IMR-90 (cell line): ENCODE measurements at regions of chr17 and their contacts with region 1.

Region 1: DNA sequence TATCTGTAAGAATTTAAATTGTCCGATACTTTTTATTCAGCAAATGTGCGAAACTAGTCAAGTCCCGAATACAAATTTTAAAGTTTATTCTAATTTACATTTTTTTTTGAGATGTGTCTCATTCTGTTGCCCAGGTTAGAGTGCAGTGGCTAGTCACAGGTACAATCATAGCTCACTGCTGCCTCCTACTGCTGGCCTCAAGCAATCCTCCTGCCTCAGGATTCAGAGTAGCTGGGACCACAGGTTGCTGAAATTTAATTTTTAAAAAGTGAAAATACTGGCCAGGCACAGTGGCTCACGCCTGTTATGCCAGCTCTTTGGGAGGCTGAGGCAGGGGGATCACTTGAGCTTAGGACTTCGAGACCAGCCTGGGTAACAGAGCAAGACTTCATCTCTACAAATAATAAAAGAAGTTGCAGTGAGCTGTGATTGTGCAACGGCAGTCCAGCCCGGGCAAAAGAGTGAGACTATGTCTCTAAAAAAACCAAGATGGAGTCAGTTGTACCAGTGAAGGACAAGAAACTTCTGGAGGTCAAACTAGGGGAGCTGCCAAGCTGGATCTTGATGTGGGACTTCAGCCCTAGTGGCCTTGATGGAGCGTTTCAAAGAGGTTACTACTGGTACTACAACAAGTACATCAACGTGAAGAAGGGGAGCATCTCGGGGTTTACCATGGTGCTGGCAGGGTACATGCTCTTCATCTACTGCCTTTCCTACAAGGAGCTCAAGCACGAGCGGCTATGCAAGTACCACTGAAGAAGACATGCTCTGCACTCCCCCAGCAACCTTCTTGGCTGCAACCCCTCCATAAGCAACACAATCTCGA is 5.6 kb downstream of the POLG2 start:
- DNase-seq: peak; percentile 42
- ATAC-seq: peak; percentile 66
- H3K4me3 ChIP-seq: no peak overlapping the region
- H3K27ac ChIP-seq: no peak overlapping the region
- H3K4me1 ChIP-seq: no peaks in the 10 kb centered on the region
- H3K27me3 ChIP-seq: no peaks in the 10 kb centered on the region
- CTCF ChIP-seq: peak; percentile 63
- POLR2A ChIP-seq: no peak
- RAD21 ChIP-seq: peak; percentile 70

Region 2: GRCh38 chr17:64306850-64307463 is 184.3 kb before region 1 on chr17:
- CTCF ChIA-PET with region 1: no interaction called
- POLR2A ChIA-PET with region 1: no interaction called
- dilution Hi-C with region 1: no loop called
- in situ Hi-C with region 1: no loop called
- intact Hi-C with region 1: loop called (anchors 5 kb)
- DNase-seq: peak; percentile 67
- ATAC-seq: peak; percentile 65
- H3K4me3 ChIP-seq: no peak overlapping the region
- H3K27ac ChIP-seq: no peak overlapping the region
- H3K4me1 ChIP-seq: no peaks in the 10 kb centered on the region
- H3K27me3 ChIP-seq: peaks cover 41% of the 10 kb centered on the region
- CTCF ChIP-seq: peak; percentile 82
- POLR2A ChIP-seq: no peak
- RAD21 ChIP-seq: peak; percentile 50

Region 3: DNA sequence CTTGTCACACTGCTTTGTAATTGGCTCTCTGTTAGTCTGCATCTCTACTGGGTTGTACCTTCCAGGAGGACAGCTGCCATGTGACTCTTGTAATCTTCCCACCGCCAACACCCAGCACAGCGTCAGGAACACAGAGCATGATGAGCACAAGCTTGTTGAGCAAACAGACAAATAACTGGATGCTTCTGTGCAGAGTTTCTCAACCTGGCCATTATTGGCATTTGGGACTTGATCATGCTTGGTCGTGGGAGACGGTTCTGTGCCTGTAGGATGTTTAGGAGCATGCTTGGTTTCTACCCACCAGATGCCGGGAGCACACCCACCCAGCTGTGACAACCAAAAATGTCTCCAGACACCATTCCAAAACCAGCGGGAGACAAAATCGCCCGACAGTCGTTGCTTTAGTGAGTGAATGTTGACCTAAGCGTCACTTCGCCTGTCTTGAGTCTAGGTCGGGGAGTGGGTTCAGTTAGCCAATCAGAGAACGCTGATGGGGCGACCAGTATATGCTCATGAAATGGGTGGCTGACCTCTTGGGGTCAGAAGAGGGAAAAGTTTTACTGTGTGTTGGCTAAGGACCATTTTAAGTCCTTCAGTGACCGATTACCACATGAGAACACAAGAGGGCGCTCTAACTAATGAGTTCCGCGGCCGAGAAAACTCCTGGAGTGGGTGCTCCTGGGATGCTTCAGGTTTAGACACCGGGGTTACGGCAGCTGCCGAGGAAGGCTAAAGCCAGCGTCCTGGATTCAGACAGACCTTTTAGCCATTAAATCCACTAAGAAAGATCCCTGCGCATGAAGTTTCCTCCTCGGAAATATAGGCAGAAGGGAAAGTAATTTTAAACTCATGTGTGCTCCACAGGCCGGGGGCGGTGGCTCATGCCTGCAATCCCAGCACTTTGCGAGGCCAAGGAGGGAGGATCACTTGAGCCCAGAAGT is 170.4 kb before region 1 on chr17:
- CTCF ChIA-PET with region 1: no interaction called
- POLR2A ChIA-PET with region 1: no interaction called
- dilution Hi-C with region 1: no loop called
- in situ Hi-C with region 1: loop called (anchors 5 kb)
- intact Hi-C with region 1: loop called (anchors 5 kb)
- DNase-seq: peak; percentile 65
- ATAC-seq: peak; percentile 83; the same call in 1 of the 2 replicates
- H3K4me3 ChIP-seq: no peak overlapping the region
- H3K27ac ChIP-seq: no peak overlapping the region
- H3K4me1 ChIP-seq: no peaks in the 10 kb centered on the region
- H3K27me3 ChIP-seq: peaks cover 44% of the 10 kb centered on the region
- CTCF ChIP-seq: peak; percentile 73
- POLR2A ChIP-seq: no peak
- RAD21 ChIP-seq: peak; percentile 78

Region 4: GRCh38 chr17:64477849-64478248 is 13.4 kb before region 1 on chr17:
- CTCF ChIA-PET with region 1: interaction called, 10 read pairs
- POLR2A ChIA-PET with region 1: no interaction called
- dilution Hi-C with region 1: no loop called
- in situ Hi-C with region 1: no loop called
- intact Hi-C with region 1: no loop called
- DNase-seq: peak; percentile 32
- ATAC-seq: peak; percentile 65
- H3K4me3 ChIP-seq: no peak overlapping the region
- H3K27ac ChIP-seq: no peak overlapping the region
- H3K4me1 ChIP-seq: no peaks in the 10 kb centered on the region; the same call in 1 of the 2 replicates
- H3K27me3 ChIP-seq: no peaks in the 10 kb centered on the region
- CTCF ChIP-seq: no peak
- POLR2A ChIP-seq: no peak
- RAD21 ChIP-seq: no peak